BJ (cell line): ENCODE measurements at regions of chr17 and their contacts with region 1.

Region 1: DNA sequence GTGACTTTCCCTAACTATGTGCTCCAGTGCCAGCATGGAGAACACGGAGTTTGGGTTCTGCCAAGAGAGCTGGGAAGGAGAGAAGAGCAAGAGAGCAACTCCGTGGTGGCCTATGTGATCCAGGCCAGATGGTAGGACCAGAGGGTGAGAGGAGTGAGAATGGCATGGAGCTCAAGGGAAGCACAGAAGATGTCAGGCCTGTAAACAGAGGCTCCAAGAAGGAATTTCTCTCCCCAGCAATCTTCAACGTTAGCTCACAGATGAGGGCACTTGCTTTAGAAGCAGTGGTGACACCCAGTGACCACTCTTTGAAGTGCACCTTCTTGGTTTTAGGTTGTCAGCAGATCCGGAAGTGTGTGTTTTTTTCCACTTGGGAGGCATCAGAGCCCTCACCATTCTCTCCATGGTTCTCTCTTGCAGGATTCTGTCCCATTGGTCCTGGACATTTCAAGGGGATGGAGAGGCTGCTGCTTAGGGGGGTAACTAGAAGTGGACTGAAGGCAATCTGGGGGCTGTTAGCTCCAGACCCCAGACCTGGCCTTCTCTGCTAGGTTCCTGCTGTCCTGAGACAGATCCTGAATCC is 18.1 kb upstream of the TMEM98 start:
- DNase-seq: peak; percentile 44
- H3K4me3 ChIP-seq: no peak overlapping the region
- H3K27me3 ChIP-seq: no peaks in the 10 kb centered on the region
- CTCF ChIP-seq: peak; percentile 80

Region 2: GRCh38 chr17:32783602-32784001 is 126.3 kb before region 1 on chr17:
- CTCF ChIA-PET with region 1: interaction called, 66 read pairs
- POLR2A ChIA-PET with region 1: no interaction called
- DNase-seq: no peak
- H3K4me3 ChIP-seq: no peak overlapping the region
- H3K27me3 ChIP-seq: no peaks in the 10 kb centered on the region
- CTCF ChIP-seq: peak; percentile 54

Region 3: DNA sequence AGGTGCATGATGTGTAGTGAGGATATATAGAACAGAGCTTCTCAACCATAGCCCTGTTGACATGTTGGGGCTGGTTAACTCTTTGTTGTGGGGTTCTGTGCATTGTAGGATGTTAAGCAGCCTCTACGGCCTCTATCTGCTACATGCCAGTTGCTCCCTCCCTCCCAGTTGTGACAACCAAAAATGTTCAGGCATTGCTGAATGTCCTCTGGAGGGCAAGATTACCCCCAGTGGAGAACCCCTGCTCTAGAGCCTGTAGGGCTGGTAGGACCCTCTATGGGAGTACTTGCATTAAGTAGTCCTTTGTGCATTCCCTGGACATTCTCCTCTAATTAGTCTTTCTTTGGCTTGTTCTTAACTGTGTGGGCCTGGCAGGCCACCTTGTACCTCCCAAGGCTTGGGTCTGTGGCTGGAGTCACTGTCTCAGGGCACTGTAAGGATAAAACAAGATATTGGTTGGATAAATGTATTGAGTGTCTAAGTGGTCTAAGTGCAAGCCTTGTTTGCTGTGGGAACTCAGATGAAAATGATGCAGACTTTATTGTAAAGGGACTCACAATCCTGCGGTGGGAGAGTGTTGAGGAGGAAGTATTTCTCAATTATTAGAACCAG is 13.1 kb before region 1 on chr17:
- CTCF ChIA-PET with region 1: interaction called, 10 read pairs
- POLR2A ChIA-PET with region 1: no interaction called
- DNase-seq: no peak
- H3K4me3 ChIP-seq: no peak overlapping the region
- H3K27me3 ChIP-seq: no peaks in the 10 kb centered on the region
- CTCF ChIP-seq: no peak

Region 4: GRCh38 chr17:32927724-32928585 is 18.1 kb after region 1 on chr17 and contains the start of gene TMEM98:
- CTCF ChIA-PET with region 1: interaction called, 11 read pairs
- POLR2A ChIA-PET with region 1: no interaction called
- DNase-seq: no peak
- H3K4me3 ChIP-seq: peak within 1 kb of the TSS; percentile 51
- H3K27me3 ChIP-seq: no peaks in the 10 kb centered on the region
- CTCF ChIP-seq: no peak
- polyA plus RNA-seq, gene TMEM98: 314 and 331 TPM in 2 replicates

Region 5: DNA sequence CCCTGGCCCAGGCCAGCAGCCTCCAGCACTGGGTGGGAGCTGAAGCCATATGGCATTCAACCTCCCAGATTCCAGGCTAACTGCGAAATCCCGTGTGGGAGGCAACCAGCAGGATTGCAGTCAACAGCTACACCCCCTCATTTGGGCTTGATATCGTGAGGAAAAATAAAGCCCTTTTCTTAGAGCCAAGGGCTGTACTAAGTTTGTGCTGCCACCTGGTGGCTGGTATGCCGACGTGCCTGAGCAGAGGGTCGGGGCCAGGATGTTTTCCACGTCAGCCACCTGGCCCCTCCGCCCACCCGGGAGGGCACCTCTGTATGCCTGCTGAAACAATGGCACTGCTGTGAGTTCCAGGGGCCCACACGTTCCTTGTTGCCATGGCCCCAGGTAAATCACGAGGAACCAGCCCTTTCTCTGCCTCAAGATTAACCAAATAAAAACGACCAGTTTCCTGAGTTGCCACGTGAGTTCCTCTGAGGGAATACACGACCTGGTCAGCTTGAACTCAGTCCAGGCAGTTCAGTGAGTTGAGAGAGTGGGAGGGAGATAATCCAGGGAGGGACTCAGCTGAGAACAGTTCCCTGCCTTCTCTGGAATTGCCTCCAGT is 27.1 kb after region 1 on chr17:
- CTCF ChIA-PET with region 1: interaction called, 10 read pairs
- POLR2A ChIA-PET with region 1: no interaction called
- DNase-seq: no peak
- H3K4me3 ChIP-seq: no peak overlapping the region
- H3K27me3 ChIP-seq: no peaks in the 10 kb centered on the region
- CTCF ChIP-seq: peak; percentile 82